Caco-2 (cell line): ENCODE measurements at regions of chr11 and their contacts with region 1.

Region 1: DNA sequence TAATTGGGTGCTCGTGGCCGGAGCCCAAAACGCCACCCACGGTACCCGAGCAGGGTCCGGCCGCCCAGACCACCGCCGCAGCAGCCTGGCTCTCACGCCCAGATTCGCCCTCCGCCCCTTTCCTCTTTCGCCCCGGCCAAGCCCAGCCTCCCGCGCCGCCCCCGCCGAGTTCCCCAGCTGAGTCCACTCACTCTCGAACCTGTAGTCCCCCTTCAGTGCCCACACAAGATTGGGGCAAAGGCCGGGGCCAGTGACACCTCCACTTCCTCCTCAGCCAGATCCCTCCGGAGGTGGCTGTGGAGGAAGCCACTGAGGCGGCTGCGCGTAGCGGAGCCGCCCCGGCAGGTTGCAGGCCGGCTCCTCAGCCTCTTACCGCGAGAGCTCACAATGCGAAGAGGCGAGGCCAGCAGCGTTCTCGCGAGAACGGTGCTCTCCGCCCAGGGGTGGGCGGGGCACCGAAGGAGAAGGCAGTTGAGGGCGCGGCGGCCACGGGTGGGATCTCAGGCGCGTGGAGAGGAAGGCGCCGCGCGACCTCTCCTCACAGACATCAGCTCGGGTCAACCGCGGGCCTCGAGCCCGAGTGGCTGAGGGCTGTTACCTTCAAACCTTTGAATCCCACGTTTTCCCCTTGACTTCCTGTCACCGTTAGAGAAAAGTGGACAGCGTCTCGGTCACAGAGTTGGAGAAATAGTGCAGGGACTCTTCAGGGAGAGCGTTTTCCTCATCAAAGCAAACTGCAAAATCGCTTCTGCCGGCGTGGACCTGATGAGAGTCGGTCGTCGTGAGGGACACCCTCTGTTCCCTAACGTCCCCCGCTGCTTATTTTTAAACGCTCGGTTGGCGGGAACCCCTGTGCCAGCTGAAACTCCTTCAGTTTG is at the start of gene BTBD10:
- DNase-seq: peak; percentile 95
- H3K4me3 ChIP-seq: peak within 1 kb of the TSS; percentile 81
- H3K4me3 Mint-ChIP-seq: peak within 1 kb of the TSS; percentile 99
- H3K27ac Mint-ChIP-seq: peak within 1 kb of the TSS; percentile 100
- H3K4me1 ChIP-seq: peaks cover 27% of the 10 kb centered on the region
- H3K4me1 Mint-ChIP-seq: peaks cover 29% of the 10 kb centered on the region
- H3K27me3 ChIP-seq: no peaks in the 10 kb centered on the region
- H3K27me3 Mint-ChIP-seq: no peaks in the 10 kb centered on the region
- CTCF ChIP-seq: no peak
- total RNA-seq, gene BTBD10: 41.6 and 45.0 TPM in 2 replicates

Region 2: DNA sequence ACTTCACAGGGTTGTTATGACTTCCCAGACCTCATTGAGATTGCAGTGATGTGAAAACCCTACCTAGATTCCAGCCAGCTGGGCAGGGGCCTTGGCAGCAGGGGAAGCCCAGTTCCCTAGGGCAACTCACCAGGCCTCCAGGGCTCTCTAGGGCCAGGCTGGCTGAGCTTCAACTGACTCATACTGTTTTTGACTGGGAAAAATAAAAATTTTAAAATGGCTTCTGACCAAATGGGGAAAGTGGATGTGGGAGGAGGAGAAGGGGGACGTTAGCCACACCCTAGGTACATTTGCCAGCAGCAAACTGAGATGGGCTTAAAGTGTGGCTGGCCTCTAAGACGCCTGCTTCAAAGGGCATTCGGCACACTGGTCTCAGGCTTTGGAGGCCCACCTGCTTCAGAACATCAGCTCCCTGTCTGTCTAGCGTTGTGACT is 146.6 kb before region 1 on chr11:
- CTCF ChIA-PET with region 1: no interaction called
- POLR2A ChIA-PET with region 1: no interaction called
- intact Hi-C with region 1: no loop called
- DNase-seq: no peak
- H3K4me3 ChIP-seq: no peak overlapping the region
- H3K4me3 Mint-ChIP-seq: no peak overlapping the region
- H3K27ac Mint-ChIP-seq: no peak overlapping the region
- H3K4me1 ChIP-seq: peaks cover 5% of the 10 kb centered on the region; the same call in 1 of the 2 replicates
- H3K4me1 Mint-ChIP-seq: peaks cover 7% of the 10 kb centered on the region
- H3K27me3 ChIP-seq: no peaks in the 10 kb centered on the region
- H3K27me3 Mint-ChIP-seq: no peaks in the 10 kb centered on the region
- CTCF ChIP-seq: no peak

Region 3: GRCh38 chr11:13373216-13373615 is 89.9 kb before region 1 on chr11:
- CTCF ChIA-PET with region 1: no interaction called
- POLR2A ChIA-PET with region 1: no interaction called
- intact Hi-C with region 1: no loop called
- DNase-seq: no peak
- H3K4me3 ChIP-seq: no peak overlapping the region
- H3K4me3 Mint-ChIP-seq: no peak overlapping the region
- H3K27ac Mint-ChIP-seq: no peak overlapping the region
- H3K4me1 ChIP-seq: peaks cover 3% of the 10 kb centered on the region
- H3K4me1 Mint-ChIP-seq: peaks cover 3% of the 10 kb centered on the region
- H3K27me3 ChIP-seq: no peaks in the 10 kb centered on the region
- H3K27me3 Mint-ChIP-seq: no peaks in the 10 kb centered on the region
- CTCF ChIP-seq: no peak

Region 4: DNA sequence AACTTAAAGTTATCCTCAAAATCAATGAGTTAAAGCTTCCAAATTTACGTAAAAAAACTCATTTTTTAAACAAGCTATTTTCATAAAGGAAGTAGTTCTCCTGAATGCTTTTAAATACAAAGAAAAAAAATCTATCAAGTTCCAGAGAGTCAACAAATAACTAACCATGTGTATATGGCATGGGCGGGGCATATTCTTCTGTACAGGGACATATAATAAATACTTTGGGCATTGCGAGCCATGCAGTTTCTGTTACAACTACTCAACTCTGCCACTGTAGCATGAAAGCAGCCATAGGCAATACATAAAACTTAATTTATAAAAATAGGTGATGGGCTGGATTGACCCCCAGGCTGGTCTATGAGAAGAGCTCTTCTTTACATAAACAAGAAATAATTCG is 57.9 kb before region 1 on chr11:
- CTCF ChIA-PET with region 1: no interaction called
- POLR2A ChIA-PET with region 1: interaction called, 3 read pairs
- intact Hi-C with region 1: loop called (anchors 10 kb)
- DNase-seq: no peak
- H3K4me3 ChIP-seq: no peak overlapping the region
- H3K4me3 Mint-ChIP-seq: no peak overlapping the region
- H3K27ac Mint-ChIP-seq: no peak overlapping the region
- H3K4me1 ChIP-seq: peaks cover 12% of the 10 kb centered on the region; the same call in 1 of the 2 replicates
- H3K4me1 Mint-ChIP-seq: no peaks in the 10 kb centered on the region
- H3K27me3 ChIP-seq: no peaks in the 10 kb centered on the region
- H3K27me3 Mint-ChIP-seq: no peaks in the 10 kb centered on the region
- CTCF ChIP-seq: no peak

Region 5: GRCh38 chr11:13525257-13525656 is 62.1 kb after region 1 on chr11:
- CTCF ChIA-PET with region 1: no interaction called
- POLR2A ChIA-PET with region 1: no interaction called
- intact Hi-C with region 1: no loop called
- DNase-seq: no peak
- H3K4me3 ChIP-seq: no peak overlapping the region
- H3K4me3 Mint-ChIP-seq: no peak overlapping the region
- H3K27ac Mint-ChIP-seq: no peak overlapping the region
- H3K4me1 ChIP-seq: no peaks in the 10 kb centered on the region
- H3K4me1 Mint-ChIP-seq: no peaks in the 10 kb centered on the region
- H3K27me3 ChIP-seq: no peaks in the 10 kb centered on the region
- H3K27me3 Mint-ChIP-seq: peaks cover 2% of the 10 kb centered on the region
- CTCF ChIP-seq: no peak

Region 6: GRCh38 chr11:13668102-13668956 is 205.2 kb after region 1 on chr11 and contains the start of gene FAR1:
- CTCF ChIA-PET with region 1: no interaction called
- POLR2A ChIA-PET with region 1: interaction called, 4 read pairs
- intact Hi-C with region 1: loop called (anchors 2 kb)
- DNase-seq: peak; percentile 99
- H3K4me3 ChIP-seq: peak within 1 kb of the TSS; percentile 73
- H3K4me3 Mint-ChIP-seq: peak within 1 kb of the TSS; percentile 92
- H3K27ac Mint-ChIP-seq: peak within 1 kb of the TSS; percentile 91
- H3K4me1 ChIP-seq: peaks cover 32% of the 10 kb centered on the region
- H3K4me1 Mint-ChIP-seq: peaks cover 27% of the 10 kb centered on the region
- H3K27me3 ChIP-seq: no peaks in the 10 kb centered on the region
- H3K27me3 Mint-ChIP-seq: no peaks in the 10 kb centered on the region
- CTCF ChIP-seq: peak; percentile 42 to 65
- total RNA-seq, gene FAR1: 91.2 and 96.0 TPM in 2 replicates